Activated CD4-positive, alpha-beta T cell treated with anti-CD3 and anti-CD28 coated beads for 36 hours (primary cell): ENCODE measurements at regions of chr9 and their contacts with region 1.

Region 1: GRCh38 chr9:100761276-100761802 is 183.5 kb downstream of the CAVIN4 start:
- DNase-seq: no peak
- ATAC-seq: no peak
- H3K4me3 Mint-ChIP-seq: no peak overlapping the region
- H3K27ac Mint-ChIP-seq: no peak overlapping the region
- H3K4me1 Mint-ChIP-seq: no peaks in the 10 kb centered on the region
- H3K27me3 Mint-ChIP-seq: peaks cover 5% of the 10 kb centered on the region

Region 2: GRCh38 chr9:100455470-100455869 is 305.9 kb before region 1 on chr9:
- CTCF ChIA-PET with region 1: no interaction called
- POLR2A ChIA-PET with region 1: no interaction called
- intact Hi-C with region 1: no loop called
- DNase-seq: no peak
- ATAC-seq: no peak
- H3K4me3 Mint-ChIP-seq: no peak overlapping the region
- H3K27ac Mint-ChIP-seq: no peak overlapping the region
- H3K4me1 Mint-ChIP-seq: no peaks in the 10 kb centered on the region
- H3K27me3 Mint-ChIP-seq: no peaks in the 10 kb centered on the region

Region 3: GRCh38 chr9:100601216-100601615 is 160.1 kb before region 1 on chr9:
- CTCF ChIA-PET with region 1: no interaction called
- POLR2A ChIA-PET with region 1: no interaction called
- intact Hi-C with region 1: no loop called
- DNase-seq: peak; percentile 62
- ATAC-seq: peak; percentile 58
- H3K4me3 Mint-ChIP-seq: no peak overlapping the region
- H3K27ac Mint-ChIP-seq: no peak overlapping the region
- H3K4me1 Mint-ChIP-seq: peaks cover 15% of the 10 kb centered on the region
- H3K27me3 Mint-ChIP-seq: no peaks in the 10 kb centered on the region

Region 4: DNA sequence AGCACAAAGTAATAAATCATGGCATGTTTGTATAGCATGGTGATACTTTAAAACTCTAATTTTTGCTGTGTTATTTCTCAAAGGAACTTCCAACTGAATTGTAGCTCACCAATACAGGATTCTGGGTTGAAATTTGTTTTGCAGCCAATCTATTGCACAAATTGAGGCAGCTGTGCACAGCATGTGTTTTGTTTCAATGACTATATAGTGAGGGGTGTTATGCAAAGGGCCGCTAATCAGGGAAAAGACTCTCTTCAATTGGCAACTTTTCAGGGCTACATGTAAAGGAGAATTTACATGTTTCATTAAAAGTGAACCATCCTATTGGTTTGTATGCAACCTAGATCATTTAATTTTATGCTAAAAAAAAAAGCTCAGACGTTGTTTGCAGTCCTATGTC is 311.8 kb after region 1 on chr9:
- CTCF ChIA-PET with region 1: no interaction called
- POLR2A ChIA-PET with region 1: interaction called, 11 read pairs
- intact Hi-C with region 1: no loop called
- DNase-seq: no peak
- ATAC-seq: no peak
- H3K4me3 Mint-ChIP-seq: no peak overlapping the region
- H3K27ac Mint-ChIP-seq: no peak overlapping the region
- H3K4me1 Mint-ChIP-seq: no peaks in the 10 kb centered on the region
- H3K27me3 Mint-ChIP-seq: peaks cover 3% of the 10 kb centered on the region

Region 5: DNA sequence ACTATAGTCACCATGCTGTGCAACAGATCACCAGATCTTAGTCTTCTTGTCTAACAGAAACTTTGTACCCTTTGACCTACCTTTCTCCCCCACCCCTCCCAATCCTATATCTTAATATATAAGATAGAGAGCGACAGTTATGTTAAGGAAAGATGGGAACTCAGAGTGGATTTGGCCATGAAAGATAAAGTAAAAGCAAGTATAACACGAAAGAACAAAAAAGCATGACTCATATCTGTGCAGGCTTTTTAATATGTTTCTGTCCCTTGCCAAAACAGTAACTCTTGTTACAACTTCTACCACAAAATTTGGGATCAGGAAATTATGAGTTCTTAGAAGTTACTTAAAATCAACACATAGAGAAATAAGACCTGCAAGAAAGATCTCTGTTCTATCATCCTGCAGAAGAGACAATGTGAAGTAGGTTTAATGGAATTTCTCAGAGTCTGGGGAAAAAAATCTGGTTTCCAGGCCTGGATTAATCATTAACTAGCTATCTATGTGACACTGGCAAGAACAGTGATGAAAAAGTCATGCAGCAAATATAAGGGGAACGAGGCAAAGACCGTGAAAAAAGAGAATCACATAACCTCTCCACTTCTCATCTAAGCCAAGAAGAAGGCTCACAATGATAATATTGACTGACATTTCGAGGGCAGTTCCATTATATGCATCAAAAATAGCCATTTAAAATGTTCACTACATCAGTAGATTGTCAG is 604.9 kb after region 1 on chr9:
- CTCF ChIA-PET with region 1: no interaction called
- POLR2A ChIA-PET with region 1: no interaction called
- intact Hi-C with region 1: no loop called
- DNase-seq: no peak
- ATAC-seq: no peak
- H3K4me3 Mint-ChIP-seq: no peak overlapping the region
- H3K27ac Mint-ChIP-seq: no peak overlapping the region
- H3K4me1 Mint-ChIP-seq: no peaks in the 10 kb centered on the region
- H3K27me3 Mint-ChIP-seq: peaks cover 8% of the 10 kb centered on the region